B cell (primary cell): ENCODE measurements at regions of chr20 and their contacts with region 1.

Region 1: DNA sequence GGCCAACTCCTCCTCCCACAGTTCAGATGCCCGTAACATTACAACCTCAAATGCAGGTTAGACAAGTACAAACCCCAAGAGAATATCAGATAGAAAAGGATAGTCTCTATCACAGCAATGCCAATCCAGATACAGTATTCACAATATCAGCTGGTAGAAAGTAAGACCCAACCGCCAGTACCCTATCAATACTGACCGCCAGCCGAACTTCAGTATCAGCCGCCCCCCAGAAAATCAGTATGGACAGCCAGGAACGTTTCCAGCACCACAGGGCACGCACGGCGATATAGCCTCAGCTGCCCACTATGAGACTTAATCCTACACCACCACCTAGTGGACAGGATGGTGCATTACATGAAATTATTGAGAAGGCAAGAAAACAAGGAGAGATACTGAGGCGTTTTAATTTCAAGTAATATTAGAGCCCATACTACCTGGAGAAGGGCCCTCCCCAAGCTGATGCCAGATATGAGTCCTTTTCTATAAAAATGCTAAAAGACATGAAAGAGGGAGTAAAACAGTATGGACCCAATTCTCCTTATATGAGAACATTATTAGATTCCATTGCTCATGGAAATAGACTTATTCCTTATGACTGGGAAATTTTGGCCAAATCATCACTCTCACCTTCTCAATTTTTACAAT is 17.6 kb upstream of the EIF2S2 start:
- DNase-seq: peak; percentile 81
- ATAC-seq: peak; percentile 97
- H3K4me3 ChIP-seq: peak overlapping the region in 2 of 5 experiments; percentile 8 to 15
- H3K4me3 Mint-ChIP-seq: peak overlapping the region; percentile 26
- H3K27ac ChIP-seq: no peak overlapping the region
- H3K27ac Mint-ChIP-seq: no peak overlapping the region
- H3K4me1 ChIP-seq: peaks cover 4 to 6% of the 10 kb centered on the region in 2 donors
- H3K4me1 Mint-ChIP-seq: peaks cover 7% of the 10 kb centered on the region
- H3K27me3 ChIP-seq: no peaks in the 10 kb centered on the region
- H3K27me3 Mint-ChIP-seq: peaks cover 4% of the 10 kb centered on the region
- CTCF ChIP-seq: peak; percentile 93

Region 2: DNA sequence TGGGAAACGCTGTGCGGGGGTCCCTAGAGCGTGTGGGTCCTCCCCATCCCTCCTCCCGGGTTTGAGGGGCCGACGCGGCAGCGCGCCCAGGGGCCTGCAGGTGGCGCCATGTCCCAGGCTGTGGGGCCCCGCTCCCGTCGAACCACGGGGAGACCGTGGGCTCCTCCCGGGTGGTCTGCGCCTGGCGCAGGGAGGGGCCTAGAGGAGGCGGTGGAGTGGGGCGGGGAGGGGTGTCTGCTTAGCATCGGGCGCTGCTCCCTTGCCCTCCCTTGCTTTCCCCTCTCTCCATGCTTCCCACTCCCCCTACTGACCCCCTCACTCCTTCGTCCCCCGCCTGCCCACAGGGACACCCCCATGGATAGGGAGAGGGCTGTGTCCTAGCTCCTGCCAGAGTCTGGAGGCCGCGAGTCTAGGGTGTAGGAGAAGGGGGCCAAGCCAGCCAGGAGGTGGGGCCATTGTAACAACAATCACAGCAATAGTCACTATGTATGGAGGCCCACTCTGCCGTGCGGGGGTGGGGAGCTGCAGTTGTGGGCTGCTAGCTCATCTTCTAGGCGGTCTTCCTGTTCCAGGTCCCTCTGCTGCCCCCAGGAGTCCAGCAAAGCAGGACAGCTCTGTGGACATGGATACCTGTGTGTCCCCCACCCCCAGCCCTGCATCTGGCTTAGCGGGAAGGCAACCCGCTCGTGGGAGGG is 266.8 kb before region 1 on chr20:
- CTCF ChIA-PET with region 1: interaction called, 8 read pairs
- POLR2A ChIA-PET with region 1: no interaction called
- intact Hi-C with region 1: loop called (anchors 1 kb)
- DNase-seq: peak; percentile 58
- ATAC-seq: peak; percentile 53
- H3K4me3 ChIP-seq: no peak overlapping the region
- H3K4me3 Mint-ChIP-seq: no peak overlapping the region
- H3K27ac ChIP-seq: no peak overlapping the region
- H3K27ac Mint-ChIP-seq: no peak overlapping the region
- H3K4me1 ChIP-seq: peaks cover 25 to 28% of the 10 kb centered on the region in 2 donors
- H3K4me1 Mint-ChIP-seq: peaks cover 26% of the 10 kb centered on the region
- H3K27me3 ChIP-seq: no peaks in the 10 kb centered on the region
- H3K27me3 Mint-ChIP-seq: no peaks in the 10 kb centered on the region
- CTCF ChIP-seq: peak; percentile 79

Region 3: DNA sequence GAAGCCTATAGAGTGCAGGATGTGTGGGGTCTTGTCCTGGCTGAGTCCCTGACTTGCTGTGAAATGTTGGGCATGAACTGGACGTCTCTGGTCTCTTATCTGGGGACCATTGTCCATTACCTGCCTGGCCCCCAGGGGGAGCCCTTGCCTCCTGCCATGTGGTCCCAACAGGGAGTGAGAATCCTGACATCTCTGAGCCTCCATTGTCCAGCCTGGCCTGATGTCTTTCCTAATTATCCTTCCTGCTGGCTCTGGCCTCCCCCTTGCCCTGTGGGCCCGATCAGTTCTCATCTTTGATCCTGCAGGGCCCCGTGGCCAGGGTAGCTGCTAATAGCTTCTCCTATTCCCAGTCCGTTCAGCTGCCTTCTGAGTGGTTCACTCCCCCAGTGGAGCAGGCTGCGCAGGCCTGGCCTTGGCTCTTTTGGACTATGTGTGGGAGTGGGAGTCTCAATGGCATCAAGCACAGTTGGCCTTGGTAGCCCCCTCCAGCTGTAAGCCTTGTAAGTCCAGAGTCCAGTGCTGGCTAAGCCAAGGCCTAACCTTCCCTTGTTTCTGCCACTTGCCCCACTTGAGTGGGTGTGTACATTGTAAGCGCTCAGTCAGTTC is 213.8 kb before region 1 on chr20:
- CTCF ChIA-PET with region 1: interaction called, 36 read pairs
- POLR2A ChIA-PET with region 1: no interaction called
- intact Hi-C with region 1: loop called (anchors 1 kb)
- DNase-seq: peak; percentile 56
- ATAC-seq: no peak
- H3K4me3 ChIP-seq: no peak overlapping the region
- H3K4me3 Mint-ChIP-seq: no peak overlapping the region
- H3K27ac ChIP-seq: no peak overlapping the region
- H3K27ac Mint-ChIP-seq: no peak overlapping the region
- H3K4me1 ChIP-seq: peaks cover 2 to 15% of the 10 kb centered on the region in 2 donors
- H3K4me1 Mint-ChIP-seq: peaks cover 13% of the 10 kb centered on the region
- H3K27me3 ChIP-seq: peaks cover 0 to 3% (median 0%) of the 10 kb centered on the region in 4 experiments
- H3K27me3 Mint-ChIP-seq: peaks cover 13% of the 10 kb centered on the region
- CTCF ChIP-seq: peak; percentile 74

Region 4: DNA sequence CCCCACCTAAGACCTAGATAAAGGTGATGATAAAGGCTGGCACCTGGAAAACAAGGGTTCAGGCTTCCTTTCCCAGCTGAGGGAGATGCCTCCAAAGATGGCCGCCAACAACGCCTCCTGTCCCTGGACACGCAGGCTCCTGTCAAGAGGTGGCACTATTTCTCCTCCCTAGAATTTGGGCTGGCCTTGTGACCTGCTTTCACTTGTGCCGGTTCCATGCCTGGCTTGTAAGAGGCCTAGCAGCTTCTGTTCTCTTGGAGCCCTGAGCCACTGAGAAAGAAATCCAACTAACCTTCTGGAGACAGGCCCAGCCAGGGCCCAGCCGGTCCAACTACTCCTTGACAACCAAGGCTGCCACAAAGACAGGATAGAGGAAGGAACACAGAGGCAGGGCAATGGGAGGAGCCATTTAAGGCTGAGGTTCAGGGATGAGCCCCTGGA is 196.2 kb before region 1 on chr20:
- CTCF ChIA-PET with region 1: interaction called, 3 read pairs
- POLR2A ChIA-PET with region 1: no interaction called
- intact Hi-C with region 1: loop called (anchors 1 kb)
- DNase-seq: peak; percentile 47
- ATAC-seq: peak; percentile 45
- H3K4me3 ChIP-seq: no peak overlapping the region
- H3K4me3 Mint-ChIP-seq: no peak overlapping the region
- H3K27ac ChIP-seq: no peak overlapping the region
- H3K27ac Mint-ChIP-seq: no peak overlapping the region
- H3K4me1 ChIP-seq: no peaks in the 10 kb centered on the region
- H3K4me1 Mint-ChIP-seq: no peaks in the 10 kb centered on the region
- H3K27me3 ChIP-seq: no peaks in the 10 kb centered on the region
- H3K27me3 Mint-ChIP-seq: peaks cover 13% of the 10 kb centered on the region
- CTCF ChIP-seq: no peak

Region 5: DNA sequence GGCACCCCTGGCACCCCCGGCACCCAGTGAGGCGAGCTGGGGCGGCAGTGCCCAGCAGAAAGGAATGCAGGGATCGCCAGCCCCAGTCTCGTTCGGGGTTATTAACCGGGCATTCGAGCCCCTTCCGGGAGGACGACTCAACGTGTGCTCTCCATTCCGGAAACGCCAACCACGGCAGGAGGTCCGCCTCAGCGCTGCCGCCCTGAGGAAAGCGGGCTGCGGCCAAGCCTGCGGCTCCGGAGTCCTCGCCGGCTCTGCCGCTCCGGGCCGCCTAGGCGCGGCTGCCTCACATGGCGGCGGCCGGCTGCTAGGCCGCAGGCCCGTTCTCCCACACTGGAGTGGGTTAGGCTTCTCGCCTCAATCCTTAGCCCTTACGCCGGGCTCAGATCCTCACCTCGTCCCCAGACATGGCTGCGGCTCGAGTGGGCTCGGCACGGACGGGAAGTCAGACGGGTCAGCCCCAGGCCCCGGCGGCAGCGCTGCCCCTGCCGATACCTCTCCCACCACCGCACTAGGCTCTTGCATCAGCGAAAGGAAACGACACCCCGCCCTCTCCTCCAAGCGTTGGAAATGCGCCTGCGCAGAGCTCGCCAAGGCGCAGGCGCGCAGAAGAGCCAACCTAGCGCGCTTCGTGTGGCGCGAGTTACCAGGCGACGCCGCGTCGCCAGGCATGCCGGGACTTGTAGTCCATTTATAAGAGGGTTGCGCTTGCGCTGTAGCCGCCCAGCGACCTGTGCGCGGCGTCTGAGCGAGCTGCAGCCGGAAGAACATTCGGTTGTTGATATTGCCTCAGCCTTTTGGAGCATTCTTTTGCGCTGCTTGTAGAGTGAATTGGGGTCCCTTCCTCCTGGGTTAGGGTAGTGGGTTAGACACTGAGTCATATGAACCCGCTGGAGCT is 17.7 kb before region 1 on chr20 and contains the start of gene EIF2S2:
- CTCF ChIA-PET with region 1: interaction called, 7 read pairs
- POLR2A ChIA-PET with region 1: interaction called, 3 read pairs
- intact Hi-C with region 1: loop called (anchors 1 kb)
- DNase-seq: peak; percentile 99
- ATAC-seq: peak; percentile 91
- H3K4me3 ChIP-seq: peak within 1 kb of the TSS; percentile 63 to 97 (median 90)
- H3K4me3 Mint-ChIP-seq: peak within 1 kb of the TSS; percentile 99
- H3K27ac ChIP-seq: peak within 1 kb of the TSS; percentile 80 to 95
- H3K27ac Mint-ChIP-seq: peak within 1 kb of the TSS; percentile 99
- H3K4me1 ChIP-seq: peaks cover 21 to 28% of the 10 kb centered on the region in 2 donors
- H3K4me1 Mint-ChIP-seq: peaks cover 45% of the 10 kb centered on the region
- H3K27me3 ChIP-seq: no peaks in the 10 kb centered on the region
- H3K27me3 Mint-ChIP-seq: no peaks in the 10 kb centered on the region
- CTCF ChIP-seq: no peak
- total RNA-seq, gene EIF2S2: 26.4 and 27.7 TPM in 2 replicates